H1 (cell line): ENCODE measurements at regions of chr3 and their contacts with region 1.

Region 1: GRCh38 chr3:50542177-50543034 is 25.1 kb downstream of the C3orf18 start:
- DNase-seq: peak; percentile 50 to 94
- H3K4me3 ChIP-seq: no peak overlapping the region
- H3K27ac ChIP-seq: no peak overlapping the region
- H3K4me1 ChIP-seq: peaks cover 6 to 12% (median 10%) of the 10 kb centered on the region in 4 experiments
- H3K27me3 ChIP-seq: no peaks in the 10 kb centered on the region; a peak in 1 of 7 replicates
- CTCF ChIP-seq: peak in 2 of 3 experiments; percentile 94 to 97; a peak in 3 of 4 replicates
- EP300 ChIP-seq: no peak
- POLR2A ChIP-seq: no peak
- RAD21 ChIP-seq: peak; percentile 94 to 96

Region 2: DNA sequence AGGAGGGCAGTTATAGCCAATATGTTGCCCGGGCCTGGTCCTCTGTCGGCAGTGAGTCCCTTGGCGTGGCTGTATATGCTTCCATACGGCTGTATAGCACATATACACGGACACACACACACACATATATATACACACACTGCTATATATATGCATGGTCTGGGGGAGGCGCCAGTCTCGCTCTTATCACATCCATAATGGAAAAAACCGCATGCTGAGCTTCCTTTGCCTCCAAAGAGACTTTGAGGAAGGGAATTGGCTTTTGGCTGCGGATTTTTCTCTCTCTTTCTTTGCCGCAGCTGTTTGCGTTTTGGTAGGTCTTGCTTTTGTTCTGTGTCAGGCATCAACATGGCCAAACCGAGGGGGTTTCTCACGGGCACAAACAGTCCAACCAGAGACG is 171.8 kb before region 1 on chr3:
- CTCF ChIA-PET with region 1: interaction called, 15 read pairs
- POLR2A ChIA-PET with region 1: interaction called, 3 read pairs
- DNase-seq: no peak
- H3K4me3 ChIP-seq: no peak overlapping the region
- H3K27ac ChIP-seq: no peak overlapping the region
- H3K4me1 ChIP-seq: peaks cover 0 to 32% (median 23%) of the 10 kb centered on the region in 4 experiments; a peak in 6 of 7 replicates
- H3K27me3 ChIP-seq: no peaks in the 10 kb centered on the region; a peak in 2 of 7 replicates
- CTCF ChIP-seq: peak in 1 of 3 experiments; percentile 34; a peak in 1 of 4 replicates
- EP300 ChIP-seq: no peak
- POLR2A ChIP-seq: no peak
- RAD21 ChIP-seq: peak; percentile 41 to 44; a peak in 3 of 4 replicates

Region 3: GRCh38 chr3:50445919-50446318 is 96.5 kb before region 1 on chr3:
- CTCF ChIA-PET with region 1: interaction called, 473 read pairs
- POLR2A ChIA-PET with region 1: no interaction called
- DNase-seq: no peak
- H3K4me3 ChIP-seq: no peak overlapping the region
- H3K27ac ChIP-seq: no peak overlapping the region
- H3K4me1 ChIP-seq: peaks cover 0 to 15% (median 8%) of the 10 kb centered on the region in 4 experiments; a peak in 6 of 7 replicates
- H3K27me3 ChIP-seq: no peaks in the 10 kb centered on the region
- CTCF ChIP-seq: no peak
- EP300 ChIP-seq: no peak
- POLR2A ChIP-seq: no peak
- RAD21 ChIP-seq: no peak

Region 4: DNA sequence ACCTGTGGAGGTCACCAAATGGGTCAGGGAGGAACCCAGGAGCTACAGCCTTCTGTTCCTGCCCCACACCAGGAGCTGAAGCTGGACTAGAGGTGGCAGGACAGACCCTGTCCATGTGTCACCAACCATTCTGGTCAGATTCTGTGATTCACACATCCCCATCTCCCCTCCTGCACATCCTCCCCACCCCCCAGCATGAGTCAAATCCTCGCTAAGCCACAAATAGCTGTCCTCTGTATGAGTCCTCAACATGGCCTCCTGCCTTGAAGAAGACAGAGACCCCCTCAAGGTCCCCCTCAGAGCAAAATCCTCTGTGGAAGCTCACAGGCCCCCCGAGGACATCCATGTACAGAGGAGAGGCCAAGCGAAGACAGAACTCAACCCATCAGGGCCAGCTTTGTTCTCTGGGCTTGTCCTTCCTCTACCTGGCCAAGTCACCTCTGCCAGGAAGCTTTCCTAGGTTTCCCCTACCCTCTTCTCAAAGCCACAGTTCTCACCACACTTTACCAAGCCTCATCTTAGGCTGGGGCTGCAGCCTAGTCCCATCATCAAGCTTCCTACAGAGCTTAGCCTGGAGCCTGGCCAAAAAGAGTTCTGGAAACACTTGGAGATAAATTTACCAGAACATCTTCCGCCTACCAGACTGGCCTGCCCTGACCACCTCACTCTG is 56.1 kb before region 1 on chr3:
- CTCF ChIA-PET with region 1: interaction called, 13 read pairs
- POLR2A ChIA-PET with region 1: no interaction called
- DNase-seq: no peak
- H3K4me3 ChIP-seq: no peak overlapping the region
- H3K27ac ChIP-seq: no peak overlapping the region
- H3K4me1 ChIP-seq: peaks cover 3 to 35% (median 12%) of the 10 kb centered on the region in 4 experiments; a peak in 6 of 7 replicates
- H3K27me3 ChIP-seq: no peaks in the 10 kb centered on the region; a peak in 1 of 7 replicates
- CTCF ChIP-seq: no peak
- EP300 ChIP-seq: no peak
- POLR2A ChIP-seq: no peak
- RAD21 ChIP-seq: no peak

Region 5: GRCh38 chr3:50519471-50520089 is 22.8 kb before region 1 on chr3:
- CTCF ChIA-PET with region 1: interaction called, 129 read pairs
- POLR2A ChIA-PET with region 1: interaction called, 6 read pairs
- DNase-seq: peak; percentile 81 to 95
- H3K4me3 ChIP-seq: no peak overlapping the region
- H3K27ac ChIP-seq: no peak overlapping the region
- H3K4me1 ChIP-seq: peaks cover 3 to 55% (median 42%) of the 10 kb centered on the region in 4 experiments
- H3K27me3 ChIP-seq: no peaks in the 10 kb centered on the region
- CTCF ChIP-seq: peak in 2 of 3 experiments; percentile 95 to 99; a peak in 3 of 4 replicates
- EP300 ChIP-seq: no peak
- POLR2A ChIP-seq: no peak
- RAD21 ChIP-seq: peak; percentile 80 to 86

Region 6: GRCh38 chr3:50666837-50667236 is 124.4 kb after region 1 on chr3:
- CTCF ChIA-PET with region 1: no interaction called
- POLR2A ChIA-PET with region 1: no interaction called
- DNase-seq: no peak
- H3K4me3 ChIP-seq: no peak overlapping the region
- H3K27ac ChIP-seq: no peak overlapping the region
- H3K4me1 ChIP-seq: peaks cover 0 to 3% (median 0%) of the 10 kb centered on the region in 4 experiments; a peak in 1 of 7 replicates
- H3K27me3 ChIP-seq: no peaks in the 10 kb centered on the region; a peak in 1 of 7 replicates
- CTCF ChIP-seq: no peak
- EP300 ChIP-seq: no peak
- POLR2A ChIP-seq: no peak
- RAD21 ChIP-seq: no peak

Region 7: GRCh38 chr3:50830451-50830850 is 288.0 kb after region 1 on chr3:
- CTCF ChIA-PET with region 1: no interaction called
- POLR2A ChIA-PET with region 1: no interaction called
- DNase-seq: no peak
- H3K4me3 ChIP-seq: no peak overlapping the region
- H3K27ac ChIP-seq: no peak overlapping the region
- H3K4me1 ChIP-seq: peaks cover 0 to 4% (median 3%) of the 10 kb centered on the region in 4 experiments; a peak in 4 of 7 replicates
- H3K27me3 ChIP-seq: no peaks in the 10 kb centered on the region
- CTCF ChIP-seq: no peak
- EP300 ChIP-seq: no peak
- POLR2A ChIP-seq: no peak
- RAD21 ChIP-seq: no peak

Region 8: DNA sequence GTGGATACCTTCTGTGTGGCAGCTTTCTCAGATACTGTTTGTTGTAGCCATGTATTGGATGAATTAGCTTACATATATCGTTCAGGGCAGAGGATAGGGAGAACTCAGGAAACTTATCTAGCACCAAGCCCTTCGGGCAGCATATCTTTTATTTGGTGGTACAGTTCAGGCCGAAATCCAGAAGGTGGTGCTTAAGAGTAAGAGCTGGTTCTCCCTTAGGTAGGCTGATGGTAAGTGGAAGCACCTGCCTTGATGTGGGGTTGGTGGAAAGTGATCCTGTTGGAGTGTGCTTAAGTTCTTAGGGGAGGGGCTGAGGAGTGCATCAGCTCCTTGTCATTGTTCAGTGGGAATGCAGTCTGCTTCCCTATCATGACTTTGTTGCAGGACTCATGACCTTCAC is 319.8 kb after region 1 on chr3:
- CTCF ChIA-PET with region 1: no interaction called
- POLR2A ChIA-PET with region 1: no interaction called
- DNase-seq: peak in 1 of 2 experiments; percentile 10
- H3K4me3 ChIP-seq: no peak overlapping the region
- H3K27ac ChIP-seq: no peak overlapping the region
- H3K4me1 ChIP-seq: no peaks in the 10 kb centered on the region
- H3K27me3 ChIP-seq: no peaks in the 10 kb centered on the region
- CTCF ChIP-seq: peak in 2 of 3 experiments; percentile 50 to 55; a peak in 3 of 4 replicates
- EP300 ChIP-seq: no peak
- POLR2A ChIP-seq: no peak
- RAD21 ChIP-seq: peak; percentile 58 to 68